ENCODE measurements at regions of chr1 and their contacts with region 1.

Region 1: DNA sequence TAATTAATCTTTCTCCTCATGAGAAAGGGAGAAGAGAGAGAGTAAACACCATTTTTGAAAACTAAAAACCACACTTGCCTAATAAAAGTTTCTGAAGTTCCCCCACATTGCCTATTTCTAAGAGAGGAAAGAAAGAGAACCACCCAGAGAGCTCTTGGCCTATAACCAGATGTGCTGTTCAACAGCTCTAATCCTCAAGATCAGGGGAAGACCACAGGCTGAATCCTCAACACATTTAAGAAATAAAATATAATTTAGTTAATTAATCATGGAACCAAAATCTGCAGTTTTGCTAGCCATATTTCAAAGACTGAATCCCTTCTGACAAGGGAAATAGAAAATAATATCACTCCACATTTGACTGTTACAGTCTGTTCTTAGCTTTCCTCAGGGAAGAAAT is 11.9 kb downstream of the PRRX1 start:
- DNase-seq: no peak
- H3K4me3 ChIP-seq: no peak overlapping the region
- H3K27me3 ChIP-seq: no peaks in the 10 kb centered on the region
- CTCF ChIP-seq: no peak

Region 2: DNA sequence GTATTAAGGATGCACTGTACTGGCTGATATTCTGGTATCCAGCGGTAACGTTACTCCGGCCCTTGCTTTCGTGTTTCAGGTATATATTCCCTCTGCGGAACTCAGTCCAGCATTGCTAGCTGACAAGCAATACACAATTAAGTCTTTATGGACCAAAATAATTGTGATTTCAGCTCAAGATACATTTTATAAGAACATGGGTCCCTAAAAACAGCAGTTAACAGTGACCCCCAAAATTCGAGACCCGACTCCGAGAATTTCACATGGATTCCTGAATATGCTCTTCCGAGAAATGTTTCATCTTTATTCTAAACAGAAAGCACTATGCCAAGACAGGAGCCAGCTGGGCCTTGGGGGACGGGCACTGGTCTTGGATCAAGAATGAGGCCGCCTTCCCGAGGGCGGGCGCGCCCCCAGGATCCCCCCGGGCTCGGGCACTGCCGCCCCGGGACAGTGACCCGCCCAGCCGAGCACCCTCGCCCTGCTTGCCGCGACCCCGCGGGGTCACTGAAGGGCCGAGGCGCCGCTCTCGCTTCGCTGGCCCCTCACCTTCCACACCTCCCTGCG is 782.9 kb before region 1 on chr1:
- CTCF ChIA-PET with region 1: no interaction called
- POLR2A ChIA-PET with region 1: interaction called, 10 read pairs
- DNase-seq: no peak
- H3K4me3 ChIP-seq: peak overlapping the region; percentile 79
- H3K27me3 ChIP-seq: no peaks in the 10 kb centered on the region; the same call in none of the 2 replicates
- CTCF ChIP-seq: no peak

Region 3: DNA sequence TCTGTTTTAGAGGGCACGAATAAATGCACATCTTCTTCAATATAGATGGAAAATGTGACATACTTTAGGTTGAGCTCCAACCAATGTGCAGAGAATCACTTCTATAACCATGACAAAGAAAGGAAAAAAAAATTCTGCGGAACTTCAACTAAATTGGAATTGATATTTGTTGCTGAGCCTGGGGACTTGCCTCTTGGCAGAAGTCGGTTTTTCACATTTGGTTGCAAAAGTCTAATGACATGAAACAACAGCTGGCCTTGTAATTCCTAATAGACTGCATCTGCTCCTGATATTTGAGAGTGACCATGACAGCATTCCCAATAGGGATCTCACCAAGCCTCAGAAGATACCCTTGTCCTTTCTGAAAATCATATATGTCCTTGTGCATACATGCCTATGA is 100.9 kb after region 1 on chr1:
- CTCF ChIA-PET with region 1: no interaction called
- POLR2A ChIA-PET with region 1: no interaction called
- DNase-seq: no peak
- H3K4me3 ChIP-seq: no peak overlapping the region
- H3K27me3 ChIP-seq: no peaks in the 10 kb centered on the region
- CTCF ChIP-seq: no peak

Measured in BJ (cell line).